Pancreas (tissue), 10 donors: ENCODE measurements at regions of chr11 and their contacts with region 1.

Region 1: GRCh38 chr11:121591405-121592033 is 138.8 kb upstream of the SORL1-AS1 start:
- DNase-seq: peak in 4 of 6 donors; percentile 45 to 77 (median 52)
- ATAC-seq: peak; percentile 78 to 92 (median 90)
- H3K4me3 ChIP-seq: no peak overlapping the region
- H3K27ac ChIP-seq: no peak overlapping the region
- H3K4me1 ChIP-seq: no peaks in the 10 kb centered on the region
- H3K27me3 ChIP-seq: no peaks in the 10 kb centered on the region
- CTCF ChIP-seq: peak; percentile 74 to 88 (median 82)

Region 2: GRCh38 chr11:121249039-121249663 is 342.4 kb before region 1 on chr11:
- intact Hi-C with region 1: loop called in 1 of 3 experiments (anchors 10 kb)
- DNase-seq: no peak
- ATAC-seq: peak in 3 of 4 donors; percentile 72 to 78 (median 74)
- H3K4me3 ChIP-seq: no peak overlapping the region
- H3K27ac ChIP-seq: no peak overlapping the region
- H3K4me1 ChIP-seq: peaks cover 0 to 4% (median 0%) of the 10 kb centered on the region in 3 donors
- H3K27me3 ChIP-seq: peaks cover 0 to 3% (median 0%) of the 10 kb centered on the region in 4 donors
- CTCF ChIP-seq: peak in 3 of 4 donors; percentile 40 to 88 (median 71)

Region 3: DNA sequence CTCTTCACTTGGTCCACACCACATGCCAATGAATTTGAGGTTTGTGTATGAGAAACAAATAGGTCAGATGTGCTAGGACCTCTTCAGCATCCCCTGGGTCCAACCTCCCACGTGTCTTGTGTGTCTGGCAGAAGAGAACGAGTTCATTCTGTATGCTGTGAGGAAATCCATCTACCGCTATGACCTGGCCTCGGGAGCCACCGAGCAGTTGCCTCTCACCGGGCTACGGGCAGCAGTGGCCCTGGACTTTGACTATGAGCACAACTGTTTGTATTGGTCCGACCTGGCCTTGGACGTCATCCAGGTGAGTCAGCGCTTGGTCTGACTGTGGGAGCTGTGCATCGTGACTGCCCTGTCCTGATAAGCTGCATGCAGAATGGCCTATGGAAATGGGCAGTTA is 37.7 kb before region 1 on chr11:
- intact Hi-C with region 1: no loop called
- DNase-seq: peak; percentile 63 to 87 (median 82)
- ATAC-seq: peak; percentile 93 to 98 (median 96)
- H3K4me3 ChIP-seq: no peak overlapping the region
- H3K27ac ChIP-seq: no peak overlapping the region
- H3K4me1 ChIP-seq: no peaks in the 10 kb centered on the region
- H3K27me3 ChIP-seq: no peaks in the 10 kb centered on the region
- CTCF ChIP-seq: no peak

Region 4: GRCh38 chr11:121722431-121723245 is 131.1 kb after region 1 on chr11:
- intact Hi-C with region 1: no loop called
- DNase-seq: peak; percentile 66 to 86 (median 74)
- ATAC-seq: peak; percentile 94 to 96 (median 95)
- H3K4me3 ChIP-seq: peak overlapping the region; percentile 5 to 34 (median 19)
- H3K27ac ChIP-seq: peak overlapping the region; percentile 60 to 86 (median 80)
- H3K4me1 ChIP-seq: no peaks in the 10 kb centered on the region
- H3K27me3 ChIP-seq: peaks cover 0 to 4% (median 0%) of the 10 kb centered on the region in 4 donors
- CTCF ChIP-seq: no peak

Region 5: DNA sequence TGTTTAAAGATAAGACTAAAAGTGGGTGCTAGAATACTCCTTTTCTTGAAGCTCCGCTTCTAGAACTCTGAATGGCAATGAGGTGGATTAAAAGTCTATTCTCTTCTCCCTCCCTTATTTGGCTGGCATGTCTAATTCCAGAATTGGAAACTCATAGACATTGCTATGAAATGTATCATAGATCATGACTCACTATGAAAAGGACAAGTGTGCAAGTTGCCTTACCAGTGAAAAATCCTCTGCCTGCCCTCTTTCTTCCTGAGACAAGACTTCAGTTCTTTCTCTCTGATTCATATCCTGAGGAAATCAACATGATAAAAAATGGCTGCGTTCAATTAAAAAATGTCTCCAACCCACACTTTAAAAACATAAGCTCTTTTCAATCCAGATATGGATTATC is 597.7 kb after region 1 on chr11:
- intact Hi-C with region 1: no loop called
- DNase-seq: no peak
- ATAC-seq: peak in 3 of 4 donors; percentile 38 to 64 (median 47)
- H3K4me3 ChIP-seq: no peak overlapping the region
- H3K27ac ChIP-seq: no peak overlapping the region
- H3K4me1 ChIP-seq: no peaks in the 10 kb centered on the region
- H3K27me3 ChIP-seq: no peaks in the 10 kb centered on the region
- CTCF ChIP-seq: no peak